ENCODE measurements at regions of chr12 and their contacts with region 1.

Region 1: GRCh38 chr12:56724972-56725722 is at the start of gene NACA:
- DNase-seq: peak; percentile 100
- ATAC-seq: peak; percentile 95
- H3K4me3 Mint-ChIP-seq: peak within 1 kb of the TSS; percentile 98
- H3K27ac Mint-ChIP-seq: peak within 1 kb of the TSS; percentile 99
- H3K4me1 Mint-ChIP-seq: peaks cover 42% of the 10 kb centered on the region
- H3K27me3 Mint-ChIP-seq: no peaks in the 10 kb centered on the region
- CTCF ChIP-seq: no peak
- total RNA-seq, gene NACA: 1,203 to 1,221 TPM

Region 2: GRCh38 chr12:56645717-56646446 is 79.3 kb before region 1 on chr12 and contains the start of gene ATP5F1B:
- CTCF ChIA-PET with region 1: interaction called, 3 read pairs
- POLR2A ChIA-PET with region 1: interaction called, 13 read pairs
- intact Hi-C with region 1: loop called (anchors 10 kb)
- DNase-seq: peak; percentile 97
- ATAC-seq: peak; percentile 98
- H3K4me3 Mint-ChIP-seq: peak within 1 kb of the TSS; percentile 86
- H3K27ac Mint-ChIP-seq: peak within 1 kb of the TSS; percentile 97
- H3K4me1 Mint-ChIP-seq: peaks cover 33% of the 10 kb centered on the region
- H3K27me3 Mint-ChIP-seq: no peaks in the 10 kb centered on the region
- CTCF ChIP-seq: no peak
- total RNA-seq, gene ATP5F1B: 859 to 869 TPM

Region 3: DNA sequence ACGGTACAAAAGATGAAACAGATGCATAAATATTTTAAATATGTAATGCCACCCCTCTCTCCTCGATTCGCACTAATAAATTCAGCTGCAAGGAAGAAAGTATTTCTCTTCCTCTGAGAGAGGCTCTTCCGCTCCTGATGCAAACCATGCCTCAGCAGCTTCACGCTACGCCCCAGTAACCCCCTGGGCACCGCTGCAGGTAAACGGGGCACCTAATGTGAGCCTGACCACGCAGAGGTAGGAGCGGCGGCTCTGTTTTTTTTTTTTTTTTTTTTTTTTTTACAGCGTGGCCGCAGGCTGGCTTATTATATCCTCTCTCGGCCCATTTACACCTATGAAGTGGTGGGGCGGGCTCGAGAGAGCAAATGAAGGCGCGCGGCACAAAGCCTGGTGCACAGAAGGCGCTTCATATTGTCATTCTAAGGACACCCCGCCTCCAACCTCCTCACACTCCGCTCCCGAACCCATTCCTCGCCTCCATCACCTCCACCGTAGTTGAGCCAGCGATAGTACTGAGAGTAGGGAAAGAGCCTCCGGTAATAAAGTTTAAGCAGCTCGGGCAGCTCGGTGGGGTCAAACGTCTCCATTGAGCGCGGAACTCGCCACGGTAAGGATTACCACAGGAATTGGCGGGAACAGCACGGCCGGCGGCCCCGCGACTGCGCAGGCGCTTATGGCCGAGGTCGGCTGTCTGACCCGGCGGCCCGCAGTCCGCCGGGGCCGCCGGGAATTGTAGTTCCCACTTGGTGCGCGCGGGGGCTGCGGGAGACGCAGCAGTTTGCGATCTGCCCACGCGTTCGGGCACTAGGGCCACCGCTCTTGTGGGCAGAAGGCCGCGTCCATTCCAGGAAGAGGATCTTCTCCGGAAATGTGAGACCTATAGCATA is 26.8 kb after region 1 on chr12 and contains the start of gene PRIM1:
- CTCF ChIA-PET with region 1: no interaction called
- POLR2A ChIA-PET with region 1: interaction called, 16 read pairs
- intact Hi-C with region 1: no loop called
- DNase-seq: peak; percentile 94
- ATAC-seq: peak; percentile 93
- H3K4me3 Mint-ChIP-seq: peak within 1 kb of the TSS; percentile 95
- H3K27ac Mint-ChIP-seq: peak within 1 kb of the TSS; percentile 99
- H3K4me1 Mint-ChIP-seq: peaks cover 32% of the 10 kb centered on the region
- H3K27me3 Mint-ChIP-seq: no peaks in the 10 kb centered on the region
- CTCF ChIP-seq: no peak
- total RNA-seq, gene PRIM1: 80.3 to 86.7 TPM

Region 4: GRCh38 chr12:57033428-57033827 is 308.3 kb after region 1 on chr12:
- CTCF ChIA-PET with region 1: no interaction called
- POLR2A ChIA-PET with region 1: no interaction called
- intact Hi-C with region 1: no loop called
- DNase-seq: no peak
- ATAC-seq: no peak
- H3K4me3 Mint-ChIP-seq: no peak overlapping the region
- H3K27ac Mint-ChIP-seq: no peak overlapping the region
- H3K4me1 Mint-ChIP-seq: peaks cover 17% of the 10 kb centered on the region
- H3K27me3 Mint-ChIP-seq: no peaks in the 10 kb centered on the region
- CTCF ChIP-seq: no peak